ENCODE measurements at regions of chr7 and their contacts with region 1.

Region 1: DNA sequence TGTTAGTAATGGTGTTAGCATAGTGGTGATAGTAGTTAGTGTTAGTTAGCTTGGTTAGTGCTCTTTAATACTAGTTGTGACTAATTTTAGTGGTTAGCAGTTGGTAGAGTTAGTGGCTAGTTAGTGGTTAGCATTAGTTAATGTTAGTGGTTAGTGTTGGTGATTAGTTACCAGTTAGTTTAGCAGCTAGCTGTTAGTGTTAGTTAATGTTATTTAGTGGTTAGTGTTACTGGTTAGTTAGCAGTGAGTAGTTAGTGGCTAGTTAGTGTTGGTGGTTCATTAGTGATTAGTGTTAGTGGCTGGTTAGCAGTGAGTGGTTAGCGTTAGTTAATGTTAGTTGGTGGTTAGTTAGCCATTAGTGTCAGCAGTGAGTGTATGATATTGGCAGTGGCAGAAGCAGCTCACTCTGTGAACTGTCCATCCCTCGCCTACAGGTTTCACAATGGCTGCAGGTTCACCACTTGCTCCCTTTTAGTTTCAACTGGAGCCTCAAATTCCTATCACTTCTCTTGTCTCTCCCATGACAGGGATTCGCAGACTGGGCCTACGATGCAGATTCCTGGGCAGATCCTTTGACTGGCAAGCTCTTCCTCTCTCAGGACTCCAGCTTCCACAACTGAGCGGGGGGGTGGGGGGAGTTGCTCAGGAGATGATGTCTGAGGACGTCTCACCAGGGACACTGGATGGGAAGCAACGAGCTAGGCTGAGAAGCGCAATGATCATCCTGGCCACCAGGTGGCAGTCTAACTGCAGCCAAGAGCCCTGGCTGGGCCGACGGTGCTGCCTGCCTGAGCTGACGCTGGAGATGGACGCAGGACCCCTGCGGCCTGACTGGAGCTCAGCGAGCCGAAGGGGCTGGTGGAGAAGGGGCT is 19.5 kb downstream of the GHRHR start:
- DNase-seq: peak; percentile 78 to 88
- H3K4me3 ChIP-seq: no peak overlapping the region
- H3K4me3 Mint-ChIP-seq: no peak overlapping the region
- H3K27ac Mint-ChIP-seq: no peak overlapping the region
- H3K4me1 ChIP-seq: no peaks in the 10 kb centered on the region
- H3K4me1 Mint-ChIP-seq: no peaks in the 10 kb centered on the region
- H3K27me3 ChIP-seq: peaks cover 2% of the 10 kb centered on the region; the same call in 1 of the 2 replicates
- H3K27me3 Mint-ChIP-seq: peaks cover 21% of the 10 kb centered on the region
- CTCF ChIP-seq: peak; percentile 92 to 95

Region 2: DNA sequence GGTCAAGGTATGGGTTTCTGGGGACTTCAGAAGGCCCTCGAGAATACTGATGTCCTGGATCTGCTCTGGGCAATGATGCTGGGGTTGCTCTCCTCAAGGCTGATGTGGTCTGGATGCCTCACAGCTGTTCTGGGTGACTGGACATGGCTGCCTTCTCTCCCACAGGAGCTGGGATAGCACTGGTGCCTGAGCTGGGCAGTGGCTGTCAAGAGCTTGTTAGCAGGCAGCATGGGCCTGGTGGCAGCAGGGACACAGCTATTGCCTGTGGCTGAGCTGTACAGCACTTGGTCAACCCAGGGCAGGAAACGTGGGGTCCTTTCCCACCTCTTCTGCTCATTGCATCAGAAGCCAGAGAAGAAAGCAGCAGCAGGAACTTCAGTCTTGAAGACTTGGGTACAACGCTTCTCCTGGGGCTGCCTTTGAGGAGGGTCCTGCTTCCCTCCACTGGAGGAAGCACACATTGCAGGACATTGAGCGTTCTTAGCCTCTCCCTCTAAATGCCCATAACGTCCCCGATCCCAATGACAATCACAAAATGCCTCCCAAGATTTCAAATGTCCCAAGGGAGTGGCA is 81.8 kb after region 1 on chr7:
- CTCF ChIA-PET with region 1: interaction called, 6 read pairs
- POLR2A ChIA-PET with region 1: no interaction called
- intact Hi-C with region 1: loop called (anchors 2 kb)
- DNase-seq: no peak
- H3K4me3 ChIP-seq: no peak overlapping the region
- H3K4me3 Mint-ChIP-seq: no peak overlapping the region
- H3K27ac Mint-ChIP-seq: no peak overlapping the region
- H3K4me1 ChIP-seq: no peaks in the 10 kb centered on the region
- H3K4me1 Mint-ChIP-seq: no peaks in the 10 kb centered on the region
- H3K27me3 ChIP-seq: no peaks in the 10 kb centered on the region; the same call in 1 of the 2 replicates
- H3K27me3 Mint-ChIP-seq: peaks cover 10% of the 10 kb centered on the region
- CTCF ChIP-seq: peak in 1 of 2 experiments; percentile 16

Region 3: DNA sequence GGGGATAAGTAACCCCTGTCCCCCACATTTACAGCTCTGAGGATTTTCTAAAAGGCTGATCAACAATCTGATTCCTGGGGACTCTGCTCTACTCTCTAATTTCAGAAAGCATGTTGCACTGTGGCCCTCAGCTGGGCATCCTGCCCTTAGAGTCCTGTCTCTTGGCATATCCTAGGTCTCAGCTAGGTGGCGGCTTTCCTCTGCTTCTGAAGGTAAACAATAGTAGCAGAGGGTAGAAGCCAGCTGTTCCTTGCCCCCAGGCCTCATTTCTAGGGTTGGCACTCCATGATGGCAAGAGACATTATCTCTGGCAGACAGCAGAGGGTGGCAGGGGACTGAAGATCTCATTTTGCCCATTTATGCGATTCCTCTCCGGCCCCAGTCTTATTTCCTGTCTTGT is 145.8 kb after region 1 on chr7:
- CTCF ChIA-PET with region 1: interaction called, 260 read pairs
- POLR2A ChIA-PET with region 1: no interaction called
- intact Hi-C with region 1: no loop called
- DNase-seq: no peak
- H3K4me3 ChIP-seq: no peak overlapping the region
- H3K4me3 Mint-ChIP-seq: no peak overlapping the region
- H3K27ac Mint-ChIP-seq: no peak overlapping the region
- H3K4me1 ChIP-seq: no peaks in the 10 kb centered on the region
- H3K4me1 Mint-ChIP-seq: no peaks in the 10 kb centered on the region
- H3K27me3 ChIP-seq: no peaks in the 10 kb centered on the region
- H3K27me3 Mint-ChIP-seq: no peaks in the 10 kb centered on the region
- CTCF ChIP-seq: peak in 1 of 2 experiments; percentile 27

Measured in Caco-2 (cell line).